PC-3 (cell line): ENCODE measurements at regions of chr1 and their contacts with region 1.

Region 1: GRCh38 chr1:60281360-60281932 is 207.9 kb upstream of the C1orf87 start:
- DNase-seq: peak; percentile 85
- ATAC-seq: peak; percentile 99
- H3K4me3 ChIP-seq: no peak overlapping the region; the same call in 1 of the 2 replicates
- H3K27ac ChIP-seq: no peak overlapping the region
- H3K4me1 ChIP-seq: 0 out of 2 replicates have a peak, but pooled peaks cover 8% of the 10 kb centered on the region
- H3K27me3 ChIP-seq: no peaks in the 10 kb centered on the region
- CTCF ChIP-seq: peak; percentile 95

Region 2: GRCh38 chr1:60425528-60425927 is 144.1 kb after region 1 on chr1:
- CTCF ChIA-PET with region 1: interaction called, 6 read pairs
- POLR2A ChIA-PET with region 1: no interaction called
- intact Hi-C with region 1: loop called (anchors 1 kb)
- DNase-seq: peak; percentile 46
- ATAC-seq: no peak
- H3K4me3 ChIP-seq: no peak overlapping the region
- H3K27ac ChIP-seq: no peak overlapping the region
- H3K4me1 ChIP-seq: no peaks in the 10 kb centered on the region
- H3K27me3 ChIP-seq: no peaks in the 10 kb centered on the region
- CTCF ChIP-seq: peak; percentile 62

Region 3: GRCh38 chr1:60510162-60510561 is 228.7 kb after region 1 on chr1:
- CTCF ChIA-PET with region 1: no interaction called
- POLR2A ChIA-PET with region 1: no interaction called
- intact Hi-C with region 1: loop called (anchors 1 kb)
- DNase-seq: peak; percentile 56
- ATAC-seq: peak; percentile 45
- H3K4me3 ChIP-seq: no peak overlapping the region
- H3K27ac ChIP-seq: no peak overlapping the region
- H3K4me1 ChIP-seq: no peaks in the 10 kb centered on the region
- H3K27me3 ChIP-seq: no peaks in the 10 kb centered on the region
- CTCF ChIP-seq: no peak

Region 4: GRCh38 chr1:60765204-60765603 is 483.8 kb after region 1 on chr1:
- CTCF ChIA-PET with region 1: interaction called, 41 read pairs
- POLR2A ChIA-PET with region 1: no interaction called
- intact Hi-C with region 1: loop called (anchors 1 kb)
- DNase-seq: peak; percentile 71
- ATAC-seq: peak; percentile 69
- H3K4me3 ChIP-seq: no peak overlapping the region
- H3K27ac ChIP-seq: no peak overlapping the region
- H3K4me1 ChIP-seq: no peaks in the 10 kb centered on the region
- H3K27me3 ChIP-seq: peaks cover 19% of the 10 kb centered on the region; the same call in 1 of the 2 replicates
- CTCF ChIP-seq: peak; percentile 88

Region 5: GRCh38 chr1:60848583-60849188 is 567.2 kb after region 1 on chr1:
- CTCF ChIA-PET with region 1: no interaction called
- POLR2A ChIA-PET with region 1: no interaction called
- intact Hi-C with region 1: loop called (anchors 1 kb)
- DNase-seq: peak; percentile 55
- ATAC-seq: no peak
- H3K4me3 ChIP-seq: no peak overlapping the region
- H3K27ac ChIP-seq: no peak overlapping the region
- H3K4me1 ChIP-seq: no peaks in the 10 kb centered on the region
- H3K27me3 ChIP-seq: peaks cover 27% of the 10 kb centered on the region
- CTCF ChIP-seq: peak; percentile 76

Region 6: GRCh38 chr1:61043010-61043820 is 761.8 kb after region 1 on chr1:
- CTCF ChIA-PET with region 1: interaction called, 3 read pairs
- POLR2A ChIA-PET with region 1: no interaction called
- intact Hi-C with region 1: loop called (anchors 5 kb)
- DNase-seq: peak; percentile 78
- ATAC-seq: peak; percentile 97
- H3K4me3 ChIP-seq: peak overlapping the region; percentile 56
- H3K27ac ChIP-seq: no peak overlapping the region
- H3K4me1 ChIP-seq: no peaks in the 10 kb centered on the region; the same call in 1 of the 2 replicates
- H3K27me3 ChIP-seq: no peaks in the 10 kb centered on the region
- CTCF ChIP-seq: peak; percentile 86